Spleen (tissue), 13 donors: ENCODE measurements at regions of chr5 and their contacts with region 1.

Region 1: GRCh38 chr5:155943516-155944407 is 383.2 kb upstream of the SGCD start:
- DNase-seq: no peak
- H3K4me3 ChIP-seq: no peak overlapping the region
- H3K27ac ChIP-seq: no peak overlapping the region
- H3K4me1 ChIP-seq: no peaks in the 10 kb centered on the region
- H3K27me3 ChIP-seq: peaks cover 0 to 4% (median 0%) of the 10 kb centered on the region in 7 donors
- CTCF ChIP-seq: peak in 8 of 11 experiments; percentile 30 to 65 (median 46)
- POLR2A ChIP-seq: no peak

Region 2: GRCh38 chr5:155418960-155419579 is 524.7 kb before region 1 on chr5:
- intact Hi-C with region 1: no loop called
- DNase-seq: no peak
- H3K4me3 ChIP-seq: no peak overlapping the region
- H3K27ac ChIP-seq: no peak overlapping the region
- H3K4me1 ChIP-seq: no peaks in the 10 kb centered on the region
- H3K27me3 ChIP-seq: no peaks in the 10 kb centered on the region
- CTCF ChIP-seq: no peak
- POLR2A ChIP-seq: no peak

Region 3: GRCh38 chr5:155884041-155884440 is 59.7 kb before region 1 on chr5:
- intact Hi-C with region 1: no loop called
- DNase-seq: no peak
- H3K4me3 ChIP-seq: no peak overlapping the region
- H3K27ac ChIP-seq: no peak overlapping the region
- H3K4me1 ChIP-seq: no peaks in the 10 kb centered on the region
- H3K27me3 ChIP-seq: no peaks in the 10 kb centered on the region
- CTCF ChIP-seq: no peak
- POLR2A ChIP-seq: no peak

Region 4: DNA sequence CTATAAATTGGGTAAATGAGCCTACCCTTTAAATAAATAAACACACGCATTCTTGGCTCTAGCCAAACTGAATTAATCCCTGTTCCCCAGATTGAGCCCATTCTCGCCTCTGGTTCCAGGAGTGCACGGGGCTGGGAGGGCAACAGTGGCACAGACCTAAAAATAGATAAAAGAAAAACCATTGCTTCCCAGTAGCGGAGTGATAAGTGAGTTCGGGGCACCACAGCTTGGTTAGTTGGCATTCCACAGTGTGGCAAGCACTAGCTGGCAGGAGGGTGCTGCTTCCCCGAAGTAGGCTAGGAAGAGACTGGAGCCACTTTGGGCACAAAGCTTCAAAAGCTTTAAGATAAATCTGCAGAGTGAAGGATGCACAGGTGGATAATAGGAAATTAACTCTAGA is 61.0 kb after region 1 on chr5:
- intact Hi-C with region 1: no loop called
- DNase-seq: no peak
- H3K4me3 ChIP-seq: no peak overlapping the region
- H3K27ac ChIP-seq: no peak overlapping the region
- H3K4me1 ChIP-seq: no peaks in the 10 kb centered on the region
- H3K27me3 ChIP-seq: no peaks in the 10 kb centered on the region
- CTCF ChIP-seq: no peak
- POLR2A ChIP-seq: no peak

Region 5: DNA sequence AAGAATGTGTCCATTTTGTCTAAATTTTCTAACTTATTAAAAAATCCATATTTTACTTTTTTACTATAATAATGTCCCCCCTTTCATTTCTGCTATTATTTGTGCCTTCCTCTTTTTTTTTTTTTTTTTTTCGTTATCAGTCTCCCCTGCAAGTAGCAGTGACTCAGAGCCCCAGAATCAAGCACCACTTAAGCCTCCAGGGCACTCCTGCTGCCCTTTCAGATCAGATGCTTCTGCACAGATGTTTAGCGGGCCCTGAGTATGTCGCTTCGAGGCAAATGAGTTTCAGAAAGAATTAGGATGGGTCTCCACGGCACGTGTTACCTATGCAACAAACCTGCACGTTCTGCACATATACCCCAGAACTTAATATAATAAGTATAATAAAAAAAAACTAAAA is 1187.2 kb after region 1 on chr5:
- intact Hi-C with region 1: loop called (anchors 10 kb)
- DNase-seq: no peak
- H3K4me3 ChIP-seq: no peak overlapping the region
- H3K27ac ChIP-seq: no peak overlapping the region
- H3K4me1 ChIP-seq: peaks cover 0 to 24% (median 5%) of the 10 kb centered on the region in 6 donors
- H3K27me3 ChIP-seq: no peaks in the 10 kb centered on the region
- CTCF ChIP-seq: no peak
- POLR2A ChIP-seq: no peak